ENCODE measurements at regions of chr14 and their contacts with region 1.

Region 1: DNA sequence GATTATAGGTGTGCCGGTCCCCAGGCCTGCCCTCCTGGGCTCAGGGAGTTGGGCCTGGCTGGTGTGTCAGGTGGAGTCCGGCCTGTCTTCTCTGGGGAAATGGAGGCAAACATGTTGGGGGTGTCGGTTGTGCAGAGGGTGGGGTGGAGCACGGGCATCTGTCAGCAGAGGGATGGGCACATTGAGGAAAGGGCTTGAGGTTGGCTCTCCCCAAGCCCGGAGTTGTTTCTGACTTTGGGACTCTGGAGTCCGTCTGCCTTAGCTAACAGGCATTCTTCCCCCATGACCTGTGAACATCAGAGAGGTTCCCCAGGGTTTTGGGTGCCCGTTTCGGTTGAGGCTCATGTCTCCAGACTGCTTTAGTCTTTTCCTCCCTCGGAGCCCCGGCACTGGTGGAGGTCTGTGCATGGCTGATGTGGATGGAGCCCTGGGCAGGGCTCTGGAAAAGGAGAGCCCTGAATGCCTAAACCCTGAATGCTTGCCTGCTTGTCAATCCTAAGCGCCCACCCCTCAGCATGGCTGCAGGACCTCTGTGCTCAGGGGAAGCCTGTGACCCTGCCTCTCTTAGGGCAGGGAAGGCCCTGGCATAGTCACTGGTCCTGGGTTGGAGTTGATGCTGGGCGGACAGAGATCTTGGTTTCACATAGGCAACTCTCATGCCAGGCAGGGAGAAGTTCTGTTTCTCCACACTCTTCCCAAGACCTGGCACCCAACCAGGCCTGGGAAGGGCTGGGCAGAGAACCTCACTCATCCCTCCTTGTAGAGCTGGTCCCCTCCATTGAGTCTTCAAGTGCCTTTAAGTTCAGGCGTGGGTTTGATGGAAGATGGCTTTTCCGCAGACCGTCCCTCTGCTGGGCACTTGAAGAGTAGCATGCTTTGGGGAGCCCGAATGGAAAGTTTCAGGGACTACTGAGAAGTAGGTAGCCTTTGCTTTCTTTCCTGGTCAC is 12.9 kb downstream of the NYNRIN start:
- DNase-seq: peak; percentile 69
- H3K4me3 ChIP-seq: no peak overlapping the region
- H3K27ac ChIP-seq: no peak overlapping the region
- H3K4me1 ChIP-seq: no peaks in the 10 kb centered on the region
- H3K27me3 ChIP-seq: no peaks in the 10 kb centered on the region
- CTCF ChIP-seq: peak; percentile 74

Region 2: DNA sequence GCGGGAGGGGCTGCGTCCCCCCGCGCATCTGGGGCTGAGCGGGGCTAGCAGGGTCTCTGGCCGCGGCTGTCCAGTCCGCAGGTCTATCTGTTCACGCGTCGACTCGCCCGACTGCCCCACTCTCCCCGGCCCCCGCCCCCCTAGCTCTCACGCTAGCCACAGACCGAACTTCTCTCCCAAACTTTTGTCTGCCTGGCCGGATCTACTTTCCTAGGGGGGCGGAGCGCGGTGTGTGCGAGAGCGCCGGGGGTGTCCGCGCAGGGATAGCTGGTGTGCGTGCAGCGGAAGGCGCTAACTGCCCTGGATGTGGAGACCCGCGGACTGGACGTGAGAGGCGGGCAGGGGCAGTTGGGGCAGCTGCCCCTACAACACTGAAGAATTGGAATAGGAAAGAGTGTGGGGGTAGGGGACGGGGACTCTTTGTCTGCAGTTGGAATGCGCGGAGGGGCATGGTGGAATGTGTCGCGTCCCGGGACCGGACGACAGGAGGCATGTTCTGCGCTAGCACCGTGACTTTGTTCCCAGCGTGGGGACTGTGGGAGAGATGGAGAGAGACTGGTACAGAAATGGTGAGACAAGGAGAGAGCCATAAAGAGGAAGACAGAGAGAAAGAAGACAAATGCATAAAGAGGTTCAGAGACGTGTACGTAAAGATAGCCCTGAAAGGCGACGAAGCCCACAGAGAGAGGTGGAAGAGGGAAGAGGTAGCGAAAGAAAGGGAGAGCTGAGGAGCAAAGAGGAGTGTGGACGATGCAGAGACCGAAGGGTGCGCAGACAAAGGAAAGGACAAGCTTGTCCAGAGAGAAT is 1429.1 kb before region 1 on chr14 and contains the start of gene AJUBA:
- CTCF ChIA-PET with region 1: no interaction called
- POLR2A ChIA-PET with region 1: no interaction called
- intact Hi-C with region 1: no loop called
- DNase-seq: peak; percentile 98
- H3K4me3 ChIP-seq: peak within 1 kb of the TSS; percentile 86
- H3K27ac ChIP-seq: peak within 1 kb of the TSS; percentile 86
- H3K4me1 ChIP-seq: peaks cover 25% of the 10 kb centered on the region
- H3K27me3 ChIP-seq: no peaks in the 10 kb centered on the region
- CTCF ChIP-seq: no peak
- total RNA-seq, gene AJUBA: 37.6 and 43.6 TPM in 2 replicates

Region 3: DNA sequence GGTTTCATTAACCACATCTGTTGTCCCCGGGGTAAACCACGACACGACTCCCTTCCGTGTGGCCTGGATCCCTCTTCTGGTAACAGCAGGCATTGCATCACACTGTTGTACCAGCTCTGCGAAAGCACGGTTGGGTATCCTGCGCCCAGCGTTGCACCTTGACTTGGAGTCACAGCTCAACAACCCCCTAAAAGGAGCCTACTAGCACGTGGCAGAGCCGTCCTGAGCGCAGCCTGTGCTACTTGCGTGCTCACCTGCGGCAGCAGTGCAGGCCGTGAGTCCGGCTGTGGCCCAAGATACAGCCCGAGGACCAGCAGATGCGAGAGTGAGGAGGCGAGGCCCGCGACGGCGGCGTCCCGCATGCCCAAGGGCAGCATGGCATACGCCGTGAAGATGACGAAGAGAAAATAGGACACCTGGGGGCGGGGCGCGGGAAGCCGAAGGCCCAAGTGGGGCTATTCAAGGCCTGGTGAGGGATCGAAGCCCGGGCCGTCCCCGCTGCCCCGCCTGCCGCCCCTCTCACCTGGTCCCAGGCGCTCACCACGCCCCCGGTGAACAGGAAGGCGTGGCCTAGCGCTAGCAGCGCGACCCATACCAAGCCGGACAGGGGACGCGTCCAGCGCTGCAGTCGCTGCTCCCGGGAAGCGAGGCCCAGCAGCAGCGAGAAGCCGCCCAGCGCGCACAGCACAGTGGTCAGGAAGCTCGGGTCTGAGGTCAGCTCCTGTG is 79.3 kb before region 1 on chr14:
- CTCF ChIA-PET with region 1: interaction called, 4 read pairs
- POLR2A ChIA-PET with region 1: no interaction called
- intact Hi-C with region 1: loop called (anchors 1 kb)
- DNase-seq: peak; percentile 88
- H3K4me3 ChIP-seq: no peak overlapping the region
- H3K27ac ChIP-seq: no peak overlapping the region
- H3K4me1 ChIP-seq: peaks cover 10% of the 10 kb centered on the region
- H3K27me3 ChIP-seq: no peaks in the 10 kb centered on the region
- CTCF ChIP-seq: peak; percentile 79

Region 4: GRCh38 chr14:25032092-25032784 is 620.5 kb after region 1 on chr14:
- CTCF ChIA-PET with region 1: no interaction called
- POLR2A ChIA-PET with region 1: no interaction called
- intact Hi-C with region 1: no loop called
- DNase-seq: peak; percentile 12
- H3K4me3 ChIP-seq: no peak overlapping the region
- H3K27ac ChIP-seq: no peak overlapping the region
- H3K4me1 ChIP-seq: no peaks in the 10 kb centered on the region
- H3K27me3 ChIP-seq: no peaks in the 10 kb centered on the region
- CTCF ChIP-seq: peak; percentile 44